Activated T-helper 2 cell treated with anti-CD3 and anti-CD28 coated beads, Interferon-gamma antibody, Interleukin-2, Interleukin-4, amounts not matched to agents 10 μg/mL and 5 μg/mL and 100 μg/mL, durations not matched to agents 14 hours and 24 hours and 36 hours (primary cell): ENCODE measurements at regions of chr18 and their contacts with region 1.

Region 1: DNA sequence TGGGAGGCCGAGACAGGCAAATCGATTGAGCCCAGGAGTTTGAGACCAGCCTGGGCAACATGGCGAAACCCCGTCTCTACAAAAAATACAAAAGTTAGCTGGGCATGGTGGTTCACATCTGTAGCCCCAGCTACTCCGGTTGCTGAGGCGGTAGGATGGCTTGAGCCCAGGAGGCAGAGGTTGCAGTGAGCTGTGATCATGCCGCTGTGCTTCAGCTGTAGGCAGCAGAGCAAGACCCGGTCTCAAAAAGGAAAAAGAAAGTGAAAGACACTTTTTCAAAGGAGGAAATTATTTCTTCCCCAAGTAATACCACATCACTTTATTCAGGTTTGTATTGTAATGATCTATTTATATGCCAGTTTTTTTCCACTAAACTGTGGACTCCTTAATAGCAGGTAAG is 35.7 kb upstream of the TAF4B start:
- DNase-seq: peak; percentile 34
- H3K4me3 Mint-ChIP-seq: peak overlapping the region; percentile 70
- H3K27ac Mint-ChIP-seq: peak overlapping the region; percentile 70
- H3K4me1 Mint-ChIP-seq: peaks cover 10% of the 10 kb centered on the region
- H3K27me3 Mint-ChIP-seq: no peaks in the 10 kb centered on the region

Region 2: DNA sequence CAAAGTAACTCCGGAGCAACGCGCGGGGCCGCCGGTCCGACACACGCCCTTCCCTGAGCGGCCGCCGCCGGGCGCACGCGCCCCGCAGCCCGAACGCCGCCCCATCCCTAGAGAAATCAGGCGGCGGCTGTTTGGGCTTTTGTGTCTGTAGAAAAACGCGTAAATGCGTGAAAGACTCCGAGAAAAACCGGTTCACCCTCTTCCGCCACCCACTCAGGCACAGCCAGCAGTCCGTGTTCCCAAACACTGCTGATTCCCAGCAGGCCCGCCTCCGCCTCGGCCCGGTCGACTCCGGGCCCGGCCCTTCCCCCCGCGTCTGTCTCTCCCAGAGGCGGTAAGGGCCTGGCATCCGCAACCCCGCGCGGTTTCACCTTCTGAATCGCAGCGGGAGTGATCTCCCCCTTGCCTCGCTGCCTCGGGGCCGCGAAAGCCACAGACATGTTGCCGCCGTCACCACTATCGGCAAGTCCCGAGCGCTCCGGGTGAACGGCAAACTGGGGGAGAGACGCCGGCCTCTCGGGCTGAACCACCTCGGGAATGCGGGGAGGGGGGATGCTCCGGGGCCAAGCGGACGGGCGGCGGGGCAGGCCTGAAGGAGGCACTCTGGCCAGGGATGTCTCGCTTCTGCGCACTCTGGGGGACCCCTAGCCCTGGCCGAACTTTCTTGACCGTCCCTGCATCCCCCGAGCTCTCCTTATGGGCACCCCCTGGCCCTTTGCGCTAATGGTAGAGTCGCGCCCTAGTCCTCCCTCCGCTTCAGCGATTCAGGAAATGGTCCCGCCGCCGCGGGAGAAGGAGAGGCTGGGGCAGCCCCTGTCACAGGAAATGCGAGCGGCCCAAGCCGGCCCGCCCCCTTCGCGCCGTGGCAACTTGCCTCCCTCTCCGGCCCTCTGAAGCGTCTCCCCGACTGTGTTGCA is 100.1 kb before region 1 on chr18 and contains the start of gene SS18:
- intact Hi-C with region 1: loop called (anchors 5 kb)
- DNase-seq: peak; percentile 88
- H3K4me3 Mint-ChIP-seq: peak within 1 kb of the TSS; percentile 89
- H3K27ac Mint-ChIP-seq: peak within 1 kb of the TSS; percentile 97
- H3K4me1 Mint-ChIP-seq: peaks cover 26% of the 10 kb centered on the region
- H3K27me3 Mint-ChIP-seq: peaks cover 2% of the 10 kb centered on the region
- total RNA-seq, gene SS18: 75.2 TPM in 2 replicates